Endothelial cell of umbilical vein (primary cell): ENCODE measurements at regions of chr18 and their contacts with region 1.

Region 1: DNA sequence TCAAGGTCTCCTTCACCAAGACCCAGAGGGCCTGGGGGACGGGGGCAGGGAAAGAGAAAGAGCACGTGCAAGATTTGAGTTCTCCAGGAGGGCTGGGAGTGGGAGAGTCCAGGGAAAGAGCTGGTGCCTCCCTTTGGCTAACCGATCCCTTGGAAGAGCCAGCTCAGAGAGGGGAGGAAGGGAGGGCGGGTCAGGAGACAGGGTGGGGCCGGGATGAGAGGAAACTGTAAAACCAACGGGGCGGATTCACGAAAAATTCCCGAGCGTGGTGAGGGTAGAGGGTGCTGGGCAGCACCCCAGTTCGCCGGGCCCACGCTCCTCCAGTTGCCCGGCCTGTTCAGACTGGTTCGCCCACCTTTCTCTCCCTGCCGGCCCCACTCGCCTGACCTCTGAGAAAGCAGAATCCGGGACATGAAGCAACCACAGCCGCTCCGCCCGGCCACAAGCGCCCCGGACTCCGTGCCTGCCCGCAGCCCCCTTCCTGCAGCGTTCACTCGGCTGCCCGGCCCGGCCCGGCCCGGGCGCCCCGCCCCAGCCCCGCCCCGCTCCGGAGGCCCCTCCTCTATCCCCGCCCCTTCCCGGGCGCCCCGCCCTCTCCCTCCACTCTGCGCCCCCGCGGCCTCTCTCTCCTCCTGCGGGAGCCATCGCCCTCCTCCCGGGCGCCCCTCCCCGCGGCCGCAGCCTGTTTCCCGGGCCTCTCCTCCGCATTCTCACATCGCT is 230.9 kb upstream of the SMAD2 start:
- DNase-seq: peak; percentile 26
- H3K4me3 ChIP-seq: peak overlapping the region; percentile 12 to 54 (median 46)
- H3K27ac ChIP-seq: no peak overlapping the region
- H3K4me1 ChIP-seq: peaks cover 4% of the 10 kb centered on the region
- H3K27me3 ChIP-seq: peaks cover 7 to 10% of the 10 kb centered on the region in 2 experiments
- CTCF ChIP-seq: no peak
- POLR2A ChIP-seq: no peak

Region 2: DNA sequence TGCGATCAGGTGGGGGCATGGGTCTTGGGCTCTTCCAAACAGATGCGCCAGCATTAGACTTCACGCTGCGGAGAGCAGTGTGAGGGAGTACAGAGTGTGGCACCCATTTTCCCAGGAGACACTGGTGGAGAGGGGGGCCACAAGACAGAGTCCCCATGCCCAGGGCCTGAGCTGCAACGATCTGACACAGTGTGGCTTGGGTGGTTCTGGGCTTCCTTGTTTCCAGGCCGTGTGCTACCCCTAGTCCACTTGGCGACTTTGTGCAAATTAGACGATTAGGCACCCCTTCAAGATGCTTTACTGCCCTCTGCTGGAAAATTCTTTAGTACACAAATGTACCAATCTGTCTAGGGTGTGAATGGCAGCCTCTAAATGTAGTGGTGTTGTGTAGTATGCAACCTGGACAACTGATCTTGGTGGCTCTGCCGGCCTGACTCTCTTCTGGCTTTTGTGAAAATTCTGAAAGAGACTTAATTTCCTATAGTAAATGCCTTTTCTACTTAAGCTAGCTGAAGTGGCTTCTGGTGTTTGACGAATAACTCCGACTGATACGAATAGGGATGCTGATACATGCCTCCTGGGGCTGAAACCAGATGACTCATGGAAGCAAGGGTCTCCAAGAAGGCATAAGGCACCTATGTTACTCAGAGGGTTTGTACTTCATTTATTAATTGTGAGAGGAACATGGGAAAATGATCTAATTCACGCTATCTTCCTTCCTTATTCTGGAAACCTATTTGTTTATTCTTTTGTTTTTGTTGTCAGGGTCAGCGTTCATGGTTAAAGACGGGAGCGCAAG is 138.6 kb before region 1 on chr18:
- CTCF ChIA-PET with region 1: no interaction called
- POLR2A ChIA-PET with region 1: no interaction called
- dilution Hi-C with region 1: no loop called
- intact Hi-C with region 1: loop called (anchors 2 kb)
- DNase-seq: peak; percentile 64
- H3K4me3 ChIP-seq: no peak overlapping the region
- H3K27ac ChIP-seq: no peak overlapping the region
- H3K4me1 ChIP-seq: peaks cover 10% of the 10 kb centered on the region
- H3K27me3 ChIP-seq: peaks cover 2 to 9% of the 10 kb centered on the region in 2 experiments
- CTCF ChIP-seq: peak; percentile 47 to 57
- POLR2A ChIP-seq: no peak

Region 3: DNA sequence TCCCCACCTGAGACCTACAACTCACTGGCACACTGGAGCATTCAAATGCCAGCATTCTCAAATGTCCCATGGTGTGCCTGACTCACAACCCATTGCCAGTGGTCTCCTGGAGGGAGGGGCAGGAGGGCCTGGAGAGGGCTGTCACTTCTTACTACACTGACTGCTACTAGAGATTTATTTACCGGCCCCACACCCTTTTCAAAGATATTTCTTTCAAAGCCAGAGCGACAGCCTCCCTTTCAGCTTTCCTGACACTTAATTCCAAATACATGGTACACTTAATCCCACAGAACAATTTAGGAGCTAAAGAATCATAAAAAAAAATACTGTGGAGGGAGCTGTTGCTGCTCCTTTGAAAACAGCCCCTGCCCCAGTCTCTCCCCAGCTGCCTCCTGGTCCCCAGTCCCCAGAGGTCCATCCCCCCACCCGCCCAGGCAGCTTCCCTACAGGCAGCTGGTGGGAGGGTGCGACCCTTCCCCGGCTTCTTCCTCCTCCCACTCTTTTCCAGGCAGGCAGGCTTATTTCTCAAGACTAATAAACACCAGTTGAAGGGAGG is 101.8 kb before region 1 on chr18:
- CTCF ChIA-PET with region 1: no interaction called
- POLR2A ChIA-PET with region 1: no interaction called
- dilution Hi-C with region 1: no loop called
- intact Hi-C with region 1: no loop called
- DNase-seq: no peak
- H3K4me3 ChIP-seq: no peak overlapping the region
- H3K27ac ChIP-seq: no peak overlapping the region
- H3K4me1 ChIP-seq: no peaks in the 10 kb centered on the region
- H3K27me3 ChIP-seq: peaks cover 0 to 6% of the 10 kb centered on the region in 2 experiments
- CTCF ChIP-seq: no peak
- POLR2A ChIP-seq: no peak

Region 4: GRCh38 chr18:48410095-48410920 is 249.0 kb after region 1 on chr18:
- CTCF ChIA-PET with region 1: no interaction called
- POLR2A ChIA-PET with region 1: no interaction called
- dilution Hi-C with region 1: no loop called
- intact Hi-C with region 1: loop called (anchors 10 kb)
- DNase-seq: peak; percentile 84
- H3K4me3 ChIP-seq: peak overlapping the region; percentile 42 to 52 (median 49)
- H3K27ac ChIP-seq: no peak overlapping the region
- H3K4me1 ChIP-seq: peaks cover 4% of the 10 kb centered on the region
- H3K27me3 ChIP-seq: peaks cover 37 to 55% of the 10 kb centered on the region in 2 experiments
- CTCF ChIP-seq: no peak
- POLR2A ChIP-seq: no peak